ENCODE measurements at regions of chr2 and their contacts with region 1.

Region 1: DNA sequence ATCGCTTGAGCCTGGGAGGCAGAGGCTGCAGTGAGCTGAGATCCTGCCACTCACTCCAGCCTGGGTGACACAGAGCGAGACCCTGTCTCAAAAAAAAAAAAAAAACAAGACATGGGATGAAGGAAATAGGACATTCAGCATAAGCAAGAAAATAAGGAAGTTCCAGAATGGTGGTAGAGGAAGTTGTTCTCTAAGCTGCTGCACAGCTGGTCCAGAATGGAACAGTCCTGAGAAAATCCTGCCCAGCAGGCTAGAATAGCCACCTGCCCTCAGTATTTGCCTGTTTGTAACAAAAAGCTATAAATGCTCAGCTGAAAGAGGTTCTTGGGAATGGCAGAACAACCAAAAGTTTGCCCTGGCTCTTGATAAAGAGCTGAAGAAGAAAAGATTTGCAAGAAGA is 11.1 kb upstream of the MAPRE3 start:
- DNase-seq: no peak
- ATAC-seq: no peak
- H3K4me3 ChIP-seq: no peak overlapping the region
- H3K27ac ChIP-seq: no peak overlapping the region
- H3K4me1 ChIP-seq: no peaks in the 10 kb centered on the region
- H3K27me3 ChIP-seq: peaks cover 19% of the 10 kb centered on the region
- CTCF ChIP-seq: no peak

Region 2: DNA sequence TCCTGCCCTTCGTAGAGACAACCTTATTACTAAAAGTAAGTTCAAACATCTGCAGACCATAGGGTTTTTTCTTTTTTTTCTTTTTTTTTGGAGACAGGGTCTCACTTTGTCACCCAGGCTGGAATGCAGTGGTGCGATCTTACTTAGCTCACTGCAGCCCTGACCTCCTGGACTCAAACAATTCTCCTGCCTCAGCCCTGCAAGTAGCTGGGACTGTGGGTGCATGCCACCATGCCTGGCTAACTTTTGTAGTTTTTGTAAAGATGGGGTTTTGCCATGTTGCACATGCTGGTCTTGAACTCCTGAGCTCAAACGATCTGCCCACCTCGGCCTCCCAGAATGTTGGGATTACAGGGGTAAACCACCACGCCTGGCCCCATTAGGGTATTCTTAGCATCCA is 747.3 kb before region 1 on chr2:
- CTCF ChIA-PET with region 1: no interaction called
- POLR2A ChIA-PET with region 1: no interaction called
- in situ Hi-C with region 1: no loop called
- intact Hi-C with region 1: no loop called
- DNase-seq: no peak
- ATAC-seq: no peak
- H3K4me3 ChIP-seq: no peak overlapping the region
- H3K27ac ChIP-seq: no peak overlapping the region
- H3K4me1 ChIP-seq: no peaks in the 10 kb centered on the region
- H3K27me3 ChIP-seq: no peaks in the 10 kb centered on the region
- CTCF ChIP-seq: no peak

Region 3: DNA sequence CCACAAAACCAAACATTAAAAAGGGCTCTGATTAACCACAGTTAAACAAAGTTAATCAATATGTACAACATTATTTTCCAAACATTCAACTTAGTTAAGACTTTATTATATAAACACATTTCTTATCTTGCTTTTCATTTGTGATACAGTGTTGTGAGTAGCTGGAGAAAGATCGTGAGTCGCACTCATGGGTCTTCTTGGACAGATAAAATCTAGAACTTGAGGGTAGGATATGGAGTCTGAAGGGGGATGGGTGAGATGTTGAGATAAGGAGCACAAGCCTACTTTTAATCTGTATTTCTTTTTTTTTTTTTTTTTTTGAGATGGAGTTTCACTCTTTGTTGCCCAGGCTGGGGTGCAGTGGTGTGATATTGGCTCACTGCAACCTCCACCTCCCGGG is 50.8 kb after region 1 on chr2:
- CTCF ChIA-PET with region 1: interaction called, 11 read pairs
- POLR2A ChIA-PET with region 1: no interaction called
- in situ Hi-C with region 1: no loop called
- intact Hi-C with region 1: no loop called
- DNase-seq: no peak
- ATAC-seq: no peak
- H3K4me3 ChIP-seq: no peak overlapping the region
- H3K27ac ChIP-seq: no peak overlapping the region
- H3K4me1 ChIP-seq: peaks cover 11% of the 10 kb centered on the region
- H3K27me3 ChIP-seq: no peaks in the 10 kb centered on the region
- CTCF ChIP-seq: no peak

Measured in Panc1 (cell line).